CD8-positive, alpha-beta T cell (primary cell): ENCODE measurements at regions of chr5 and their contacts with region 1.

Region 1: GRCh38 chr5:59810041-59810440 is 83.5 kb downstream of the PDE4D start:
- DNase-seq: peak; percentile 4 to 75 (median 50)
- ATAC-seq: peak; percentile 52
- H3K4me3 ChIP-seq: no peak overlapping the region
- H3K4me3 Mint-ChIP-seq: no peak overlapping the region
- H3K27ac ChIP-seq: no peak overlapping the region
- H3K27ac Mint-ChIP-seq: no peak overlapping the region
- H3K4me1 ChIP-seq: no peaks in the 10 kb centered on the region
- H3K4me1 Mint-ChIP-seq: peaks cover 4% of the 10 kb centered on the region
- H3K27me3 ChIP-seq: peaks cover 0 to 3% of the 10 kb centered on the region in 2 experiments
- H3K27me3 Mint-ChIP-seq: peaks cover 11% of the 10 kb centered on the region
- CTCF ChIP-seq: peak; percentile 96

Region 2: GRCh38 chr5:59768152-59769040 is 41.6 kb before region 1 on chr5:
- CTCF ChIA-PET with region 1: no interaction called
- POLR2A ChIA-PET with region 1: no interaction called
- intact Hi-C with region 1: no loop called
- DNase-seq: peak in 1 of 9 experiments; percentile 12
- ATAC-seq: no peak
- H3K4me3 ChIP-seq: no peak overlapping the region
- H3K4me3 Mint-ChIP-seq: no peak overlapping the region
- H3K27ac ChIP-seq: no peak overlapping the region
- H3K27ac Mint-ChIP-seq: no peak overlapping the region
- H3K4me1 ChIP-seq: peaks cover 8% of the 10 kb centered on the region
- H3K4me1 Mint-ChIP-seq: peaks cover 8% of the 10 kb centered on the region
- H3K27me3 ChIP-seq: peaks cover 0 to 2% of the 10 kb centered on the region in 2 experiments
- H3K27me3 Mint-ChIP-seq: peaks cover 32% of the 10 kb centered on the region
- CTCF ChIP-seq: no peak

Region 3: DNA sequence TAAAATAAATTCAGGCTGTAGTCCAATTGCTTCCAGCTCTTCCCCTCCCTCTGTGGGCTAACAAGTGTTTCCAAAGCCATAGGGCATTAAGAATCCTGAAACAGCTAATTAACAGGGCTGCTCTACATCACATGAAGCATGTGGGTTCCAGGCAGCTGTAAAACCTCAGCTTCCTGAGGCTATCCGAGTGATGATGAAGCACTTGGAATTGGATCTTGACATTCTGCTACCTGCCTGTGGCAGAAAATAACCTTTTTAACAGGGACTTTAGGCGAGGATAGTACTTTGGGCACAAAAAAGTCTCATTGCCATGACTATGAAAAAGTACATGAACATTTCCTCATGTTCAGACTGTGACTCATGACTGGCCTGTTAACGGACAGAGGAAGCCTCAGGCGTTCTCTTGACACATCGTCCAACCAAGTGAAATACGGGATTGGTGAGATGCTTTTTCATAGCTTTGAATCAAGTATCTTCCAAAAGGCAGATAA is 23.7 kb before region 1 on chr5:
- CTCF ChIA-PET with region 1: interaction called, 10 read pairs
- POLR2A ChIA-PET with region 1: no interaction called
- intact Hi-C with region 1: no loop called
- DNase-seq: no peak
- ATAC-seq: no peak
- H3K4me3 ChIP-seq: no peak overlapping the region
- H3K4me3 Mint-ChIP-seq: no peak overlapping the region
- H3K27ac ChIP-seq: no peak overlapping the region
- H3K27ac Mint-ChIP-seq: no peak overlapping the region
- H3K4me1 ChIP-seq: no peaks in the 10 kb centered on the region
- H3K4me1 Mint-ChIP-seq: no peaks in the 10 kb centered on the region
- H3K27me3 ChIP-seq: no peaks in the 10 kb centered on the region
- H3K27me3 Mint-ChIP-seq: peaks cover 11% of the 10 kb centered on the region
- CTCF ChIP-seq: no peak

Region 4: DNA sequence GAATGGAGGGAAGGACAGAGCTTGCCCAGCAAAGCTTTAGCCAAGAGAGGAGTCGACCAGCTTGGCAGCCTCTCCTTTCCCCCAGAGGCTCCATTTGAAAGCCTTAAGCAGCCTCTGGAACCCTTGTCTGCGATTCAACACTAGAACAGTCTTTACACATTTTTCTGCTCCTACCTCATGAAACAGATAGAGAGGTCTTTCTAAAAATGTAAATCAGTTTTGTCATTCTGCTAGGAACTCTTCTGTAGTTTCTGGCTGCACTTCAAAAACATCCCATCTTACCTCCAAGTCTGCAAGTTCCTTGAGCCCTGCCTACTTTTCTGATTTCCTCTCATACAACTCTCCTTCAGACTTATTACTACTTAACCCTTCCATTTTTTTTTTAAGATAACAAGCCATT is 13.4 kb after region 1 on chr5:
- CTCF ChIA-PET with region 1: interaction called, 10 read pairs
- POLR2A ChIA-PET with region 1: no interaction called
- intact Hi-C with region 1: no loop called
- DNase-seq: no peak
- ATAC-seq: no peak
- H3K4me3 ChIP-seq: no peak overlapping the region
- H3K4me3 Mint-ChIP-seq: no peak overlapping the region
- H3K27ac ChIP-seq: no peak overlapping the region
- H3K27ac Mint-ChIP-seq: no peak overlapping the region
- H3K4me1 ChIP-seq: no peaks in the 10 kb centered on the region
- H3K4me1 Mint-ChIP-seq: no peaks in the 10 kb centered on the region
- H3K27me3 ChIP-seq: no peaks in the 10 kb centered on the region
- H3K27me3 Mint-ChIP-seq: peaks cover 24% of the 10 kb centered on the region
- CTCF ChIP-seq: no peak

Region 5: GRCh38 chr5:60668686-60669304 is 858.8 kb after region 1 on chr5:
- CTCF ChIA-PET with region 1: interaction called, 3 read pairs
- POLR2A ChIA-PET with region 1: no interaction called
- intact Hi-C with region 1: loop called (anchors 1 to 2 kb)
- DNase-seq: peak in 2 of 9 experiments; percentile 27 to 49
- ATAC-seq: no peak
- H3K4me3 ChIP-seq: no peak overlapping the region
- H3K4me3 Mint-ChIP-seq: no peak overlapping the region
- H3K27ac ChIP-seq: no peak overlapping the region
- H3K27ac Mint-ChIP-seq: no peak overlapping the region
- H3K4me1 ChIP-seq: no peaks in the 10 kb centered on the region
- H3K4me1 Mint-ChIP-seq: no peaks in the 10 kb centered on the region
- H3K27me3 ChIP-seq: no peaks in the 10 kb centered on the region
- H3K27me3 Mint-ChIP-seq: no peaks in the 10 kb centered on the region
- CTCF ChIP-seq: peak; percentile 85